Transverse colon (tissue), 4 donors: ENCODE measurements at regions of chr14 and their contacts with region 1.

Region 1: GRCh38 chr14:89040460-89041259 is 216.2 kb downstream of the TTC8 start:
- DNase-seq: peak; percentile 88
- H3K4me3 ChIP-seq: peak overlapping the region in 3 of 4 donors; percentile 23 to 44 (median 24)
- H3K27ac ChIP-seq: peak overlapping the region; percentile 84 to 92 (median 88)
- H3K4me1 ChIP-seq: peaks cover 3 to 22% (median 8%) of the 10 kb centered on the region in 4 donors
- H3K27me3 ChIP-seq: no peaks in the 10 kb centered on the region
- CTCF ChIP-seq: peak; percentile 94 to 97 (median 95)
- EP300 ChIP-seq: no peak
- POLR2A ChIP-seq: no peak

Region 2: DNA sequence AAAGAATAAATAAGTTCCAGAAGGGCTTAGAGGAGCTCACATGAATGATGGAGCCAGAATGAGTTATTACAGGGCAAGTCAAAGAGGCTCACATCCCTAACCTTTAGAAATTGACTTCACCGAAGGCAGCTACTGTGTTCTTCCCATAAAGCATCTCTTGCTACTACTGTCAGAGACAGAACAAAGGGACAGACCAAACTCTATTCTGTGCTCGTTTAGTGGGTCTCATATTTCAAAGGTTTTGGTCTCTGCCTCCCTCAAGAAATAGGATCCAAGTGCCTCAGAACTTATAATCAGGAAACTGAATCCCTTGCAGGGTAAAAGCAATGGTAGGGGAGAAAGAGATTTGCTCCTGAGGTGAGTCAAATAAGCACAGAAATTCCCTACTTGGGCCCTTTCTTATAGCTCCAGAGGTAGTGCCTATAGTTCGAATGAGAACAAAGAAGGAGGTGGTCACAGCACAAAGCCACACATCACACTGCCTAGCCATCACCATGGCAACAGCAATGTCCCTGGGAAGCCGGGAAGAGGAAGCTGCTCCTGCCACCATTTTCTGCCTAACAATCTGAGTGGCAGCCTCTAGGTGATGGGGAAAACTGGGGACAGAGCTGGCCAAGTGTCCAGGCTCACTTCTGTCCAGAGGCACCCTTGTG is 81.4 kb after region 1 on chr14:
- in situ Hi-C with region 1: no loop called
- intact Hi-C with region 1: no loop called
- DNase-seq: no peak
- H3K4me3 ChIP-seq: no peak overlapping the region
- H3K27ac ChIP-seq: no peak overlapping the region
- H3K4me1 ChIP-seq: no peaks in the 10 kb centered on the region
- H3K27me3 ChIP-seq: no peaks in the 10 kb centered on the region
- CTCF ChIP-seq: no peak
- EP300 ChIP-seq: no peak
- POLR2A ChIP-seq: no peak

Region 3: GRCh38 chr14:89399594-89400068 is 359.0 kb after region 1 on chr14:
- in situ Hi-C with region 1: loop called in 2 of 4 experiments (anchors 25 kb)
- intact Hi-C with region 1: no loop called
- DNase-seq: no peak
- H3K4me3 ChIP-seq: no peak overlapping the region
- H3K27ac ChIP-seq: peak overlapping the region in 2 of 4 donors; percentile 26 to 44
- H3K4me1 ChIP-seq: peaks cover 0 to 24% (median 10%) of the 10 kb centered on the region in 4 donors
- H3K27me3 ChIP-seq: no peaks in the 10 kb centered on the region
- CTCF ChIP-seq: no peak
- EP300 ChIP-seq: no peak
- POLR2A ChIP-seq: no peak

Region 4: DNA sequence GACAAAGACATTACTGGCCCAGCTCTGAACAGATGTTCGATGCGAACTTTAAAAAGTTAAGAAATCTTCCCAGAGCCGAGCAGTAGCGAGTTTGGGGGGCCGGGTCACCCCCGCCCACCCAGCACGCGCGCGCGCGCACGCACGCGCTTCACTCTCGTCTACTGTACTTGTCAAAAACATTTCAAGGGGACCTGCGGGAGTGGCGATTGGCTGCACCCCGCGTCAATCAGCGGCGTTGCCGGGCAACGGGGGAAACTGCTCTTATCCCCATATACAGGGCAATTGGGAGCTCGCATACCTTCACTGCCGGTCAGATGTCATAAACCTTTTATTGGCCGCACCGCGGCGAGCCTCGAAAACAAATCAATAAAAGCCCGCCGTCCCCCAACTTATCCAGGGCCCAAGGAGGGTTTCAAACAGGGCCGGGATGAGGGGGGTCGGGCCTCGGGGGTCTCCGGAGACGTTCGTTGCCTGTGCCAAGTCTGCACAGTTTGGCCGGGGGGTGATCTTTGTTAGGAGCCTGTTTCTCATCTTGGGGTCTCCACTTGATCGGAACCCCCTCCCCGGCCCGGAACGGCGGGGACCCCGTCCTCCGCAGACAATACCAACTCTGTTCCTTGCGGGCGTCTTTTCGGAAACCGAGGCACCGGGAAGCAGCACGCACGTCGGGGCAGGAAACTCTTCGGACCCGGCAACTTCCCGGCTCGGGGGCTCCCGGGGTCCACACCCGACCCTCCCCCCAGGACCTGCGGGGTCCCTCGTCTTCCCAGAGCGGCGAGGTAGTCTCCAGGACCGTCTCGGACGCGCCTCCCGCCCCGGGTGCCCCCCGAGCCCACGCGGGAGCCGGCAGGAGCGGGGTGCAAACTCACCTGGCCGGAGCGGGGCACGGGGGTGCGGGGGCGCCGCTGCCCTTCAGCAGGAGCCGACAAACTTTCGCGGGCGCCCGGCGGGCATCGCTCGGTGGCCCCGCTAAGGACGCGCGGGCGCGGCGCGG is 375.6 kb after region 1 on chr14:
- in situ Hi-C with region 1: loop called in 1 of 4 experiments (anchors 25 kb)
- intact Hi-C with region 1: loop called (anchors 1 kb)
- DNase-seq: peak; percentile 100
- H3K4me3 ChIP-seq: peak overlapping the region; percentile 65 to 99 (median 82)
- H3K27ac ChIP-seq: peak overlapping the region; percentile 98 to 99 (median 98)
- H3K4me1 ChIP-seq: peaks cover 16 to 52% (median 30%) of the 10 kb centered on the region in 4 donors
- H3K27me3 ChIP-seq: no peaks in the 10 kb centered on the region
- CTCF ChIP-seq: no peak
- EP300 ChIP-seq: no peak
- POLR2A ChIP-seq: peak; percentile 58

Region 5: GRCh38 chr14:89767861-89768268 is 727.2 kb after region 1 on chr14:
- in situ Hi-C with region 1: loop called in 2 of 4 experiments (anchors 5 to 25 kb)
- intact Hi-C with region 1: no loop called
- DNase-seq: peak; percentile 51
- H3K4me3 ChIP-seq: no peak overlapping the region
- H3K27ac ChIP-seq: no peak overlapping the region
- H3K4me1 ChIP-seq: peaks cover 0 to 4% (median 0%) of the 10 kb centered on the region in 4 donors
- H3K27me3 ChIP-seq: no peaks in the 10 kb centered on the region
- CTCF ChIP-seq: peak; percentile 51 to 78 (median 56)
- EP300 ChIP-seq: no peak
- POLR2A ChIP-seq: no peak

Region 6: DNA sequence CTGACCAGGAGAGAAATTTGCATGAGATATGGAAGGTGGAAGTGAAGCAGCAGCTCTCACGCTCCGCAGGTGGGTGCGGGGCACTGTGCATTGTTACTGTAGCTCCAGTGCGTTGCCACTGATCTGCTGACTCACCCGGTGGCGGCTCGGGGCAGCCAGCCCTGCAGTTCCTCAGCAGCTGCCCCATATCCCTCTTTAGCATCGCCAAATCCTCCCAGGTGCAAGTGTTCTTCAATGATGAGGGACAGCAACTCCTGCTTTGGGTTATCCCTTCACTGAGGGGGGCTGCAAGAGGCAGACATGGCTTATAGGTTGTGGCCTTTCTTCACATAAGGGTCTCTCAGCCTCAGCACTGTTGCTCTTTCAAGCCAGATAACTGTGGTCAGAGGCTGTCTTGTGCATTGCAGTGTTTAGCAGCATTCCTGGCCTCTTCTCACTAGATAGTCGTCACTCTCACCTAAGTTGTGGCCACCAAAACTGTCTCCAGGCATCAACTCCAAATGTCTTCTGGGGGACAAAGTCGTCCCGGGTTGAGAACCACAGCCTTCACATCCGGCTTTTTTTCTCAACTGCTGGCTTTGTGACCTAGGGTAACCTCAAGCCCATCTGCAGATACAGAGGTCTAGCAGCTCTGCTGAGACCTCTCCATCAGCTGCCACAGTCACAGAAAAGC is 733.1 kb after region 1 on chr14:
- in situ Hi-C with region 1: loop called in 2 of 4 experiments (anchors 5 to 25 kb)
- intact Hi-C with region 1: no loop called
- DNase-seq: peak; percentile 53
- H3K4me3 ChIP-seq: no peak overlapping the region
- H3K27ac ChIP-seq: peak overlapping the region in 1 of 4 donors; percentile 34
- H3K4me1 ChIP-seq: peaks cover 0 to 4% (median 0%) of the 10 kb centered on the region in 4 donors
- H3K27me3 ChIP-seq: no peaks in the 10 kb centered on the region
- CTCF ChIP-seq: no peak
- EP300 ChIP-seq: no peak
- POLR2A ChIP-seq: no peak

Region 7: GRCh38 chr14:90235179-90235976 is 1194.7 kb after region 1 on chr14:
- in situ Hi-C with region 1: loop called in 1 of 4 experiments (anchors 25 kb)
- intact Hi-C with region 1: no loop called
- DNase-seq: peak; percentile 70
- H3K4me3 ChIP-seq: no peak overlapping the region
- H3K27ac ChIP-seq: no peak overlapping the region
- H3K4me1 ChIP-seq: peaks cover 0 to 3% (median 0%) of the 10 kb centered on the region in 4 donors
- H3K27me3 ChIP-seq: peaks cover 10% of the 10 kb centered on the region
- CTCF ChIP-seq: peak; percentile 87 to 96 (median 89)
- EP300 ChIP-seq: no peak
- POLR2A ChIP-seq: no peak